PC-3 (cell line): ENCODE measurements at regions of chr6 and their contacts with region 1.

Region 1: GRCh38 chr6:26537846-26538571 is at the start of gene HMGN4:
- DNase-seq: peak; percentile 89
- ATAC-seq: peak; percentile 77
- H3K4me3 ChIP-seq: peak within 1 kb of the TSS; percentile 98
- H3K27ac ChIP-seq: peak within 1 kb of the TSS; percentile 86
- H3K4me1 ChIP-seq: peaks cover 18% of the 10 kb centered on the region
- H3K27me3 ChIP-seq: no peaks in the 10 kb centered on the region
- CTCF ChIP-seq: no peak; the same call in 1 of the 2 replicates
- total RNA-seq, gene HMGN4: 54.8 and 57.5 TPM in 2 replicates

Region 2: GRCh38 chr6:26329763-26330511 is 208.1 kb before region 1 on chr6:
- CTCF ChIA-PET with region 1: no interaction called
- POLR2A ChIA-PET with region 1: no interaction called
- intact Hi-C with region 1: loop called (anchors 2 kb)
- DNase-seq: peak; percentile 83
- ATAC-seq: peak; percentile 44
- H3K4me3 ChIP-seq: peak overlapping the region; percentile 86
- H3K27ac ChIP-seq: no peak overlapping the region
- H3K4me1 ChIP-seq: peaks cover 16% of the 10 kb centered on the region; the same call in 1 of the 2 replicates
- H3K27me3 ChIP-seq: no peaks in the 10 kb centered on the region
- CTCF ChIP-seq: no peak

Region 3: DNA sequence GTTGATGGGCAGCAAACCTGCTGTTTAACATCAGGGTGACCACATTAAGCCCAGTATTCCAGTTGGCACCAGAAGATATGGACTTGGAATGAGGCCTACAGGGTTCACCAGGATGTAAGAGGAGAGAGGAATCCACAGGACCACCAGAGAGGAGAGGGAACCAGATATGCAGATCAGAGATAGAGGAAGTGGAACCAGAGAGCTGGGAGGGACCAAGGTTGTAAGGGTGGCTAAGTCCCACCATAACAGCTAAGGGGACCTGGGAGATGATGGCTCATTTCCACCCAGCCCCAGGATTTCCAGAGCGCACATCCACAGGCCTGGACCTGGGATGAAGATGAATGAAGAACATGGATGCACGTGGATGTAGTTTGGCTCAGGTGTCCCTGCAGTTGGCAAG is 69.2 kb before region 1 on chr6:
- CTCF ChIA-PET with region 1: no interaction called
- POLR2A ChIA-PET with region 1: no interaction called
- intact Hi-C with region 1: no loop called
- DNase-seq: no peak
- ATAC-seq: no peak
- H3K4me3 ChIP-seq: no peak overlapping the region
- H3K27ac ChIP-seq: no peak overlapping the region
- H3K4me1 ChIP-seq: peaks cover 6% of the 10 kb centered on the region; the same call in 1 of the 2 replicates
- H3K27me3 ChIP-seq: no peaks in the 10 kb centered on the region
- CTCF ChIP-seq: no peak

Region 4: GRCh38 chr6:26520853-26521599 is 17.0 kb before region 1 on chr6:
- CTCF ChIA-PET with region 1: no interaction called
- POLR2A ChIA-PET with region 1: no interaction called
- intact Hi-C with region 1: loop called (anchors 2 kb)
- DNase-seq: peak; percentile 81
- ATAC-seq: peak; percentile 92
- H3K4me3 ChIP-seq: peak overlapping the region; percentile 75
- H3K27ac ChIP-seq: no peak overlapping the region
- H3K4me1 ChIP-seq: peaks cover 15% of the 10 kb centered on the region
- H3K27me3 ChIP-seq: no peaks in the 10 kb centered on the region
- CTCF ChIP-seq: no peak

Region 5: GRCh38 chr6:26553635-26554446 is 15.8 kb after region 1 on chr6:
- CTCF ChIA-PET with region 1: no interaction called
- POLR2A ChIA-PET with region 1: interaction called, 8 read pairs
- intact Hi-C with region 1: loop called (anchors 1 kb)
- DNase-seq: peak; percentile 95
- ATAC-seq: peak; percentile 63
- H3K4me3 ChIP-seq: peak overlapping the region; percentile 93
- H3K27ac ChIP-seq: peak overlapping the region; percentile 62
- H3K4me1 ChIP-seq: peaks cover 15% of the 10 kb centered on the region
- H3K27me3 ChIP-seq: no peaks in the 10 kb centered on the region
- CTCF ChIP-seq: no peak